Tibial artery (tissue), 4 donors: ENCODE measurements at regions of chr7 and their contacts with region 1.

Region 1: GRCh38 chr7:23181684-23182553 is at the start of gene NUP42:
- DNase-seq: peak; percentile 95 to 96
- H3K4me3 ChIP-seq: peak within 1 kb of the TSS; percentile 61 to 79
- H3K27ac ChIP-seq: peak within 1 kb of the TSS; percentile 77 to 93
- H3K4me1 ChIP-seq: peaks cover 0 to 40% (median 13%) of the 10 kb centered on the region in 4 donors
- H3K27me3 ChIP-seq: no peaks in the 10 kb centered on the region
- CTCF ChIP-seq: no peak

Region 2: DNA sequence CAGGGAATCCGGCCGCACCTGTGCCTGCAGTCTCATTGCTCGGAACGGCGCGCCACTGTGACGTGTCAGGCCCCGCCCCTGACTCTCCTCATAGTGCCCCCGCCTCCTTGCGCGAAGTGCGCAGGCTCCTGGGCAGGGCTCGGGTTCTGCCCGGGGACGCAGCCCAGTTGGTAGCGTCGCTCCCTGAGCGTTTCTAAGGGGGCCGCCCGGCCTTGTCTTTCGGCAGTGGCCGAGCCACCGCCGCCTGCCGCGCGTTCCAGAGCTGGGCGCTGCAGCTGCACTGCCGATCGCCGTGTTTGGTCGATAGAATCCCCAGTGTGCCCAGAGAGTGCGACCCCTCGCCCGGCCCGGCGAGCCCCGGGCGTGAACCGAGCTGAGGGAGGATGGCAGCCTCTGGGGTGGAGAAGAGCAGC is 76.3 kb before region 1 on chr7 and contains the start of gene KLHL7:
- intact Hi-C with region 1: loop called (anchors 5 kb)
- DNase-seq: peak; percentile 97
- H3K4me3 ChIP-seq: peak within 1 kb of the TSS; percentile 72 to 100
- H3K27ac ChIP-seq: peak within 1 kb of the TSS; percentile 86 to 93
- H3K4me1 ChIP-seq: peaks cover 0 to 29% (median 23%) of the 10 kb centered on the region in 4 donors
- H3K27me3 ChIP-seq: no peaks in the 10 kb centered on the region
- CTCF ChIP-seq: no peak

Region 3: GRCh38 chr7:23247603-23248335 is 65.8 kb after region 1 on chr7:
- intact Hi-C with region 1: loop called (anchors 5 kb)
- DNase-seq: peak; percentile 46 to 75
- H3K4me3 ChIP-seq: peak overlapping the region; percentile 64 to 69
- H3K27ac ChIP-seq: peak overlapping the region; percentile 91 to 94
- H3K4me1 ChIP-seq: peaks cover 0 to 37% (median 22%) of the 10 kb centered on the region in 4 donors
- H3K27me3 ChIP-seq: no peaks in the 10 kb centered on the region
- CTCF ChIP-seq: no peak